Breast epithelium (tissue), 4 donors: ENCODE measurements at regions of chr10 and their contacts with region 1.

Region 1: DNA sequence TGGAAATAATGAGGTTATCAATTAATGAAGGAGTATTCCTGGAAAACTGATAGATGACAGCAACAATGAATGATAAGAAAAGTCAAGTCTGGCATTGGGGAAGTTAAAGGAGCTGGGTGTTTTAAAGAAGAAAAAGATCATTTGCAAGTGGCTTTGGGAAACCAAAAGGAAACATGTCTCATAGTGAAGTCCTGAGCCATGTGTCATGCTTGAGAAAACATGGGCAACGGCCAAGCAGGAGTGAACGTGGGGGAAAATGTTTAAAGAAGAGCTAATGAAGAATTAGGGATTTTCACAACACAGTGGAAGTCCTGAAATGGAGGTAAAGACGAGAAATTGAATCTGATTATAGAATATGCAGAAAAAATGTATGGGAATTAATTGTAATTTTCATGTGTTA is 1383.2 kb upstream of the CELF2 start:
- DNase-seq: no peak
- H3K4me3 ChIP-seq: no peak overlapping the region
- H3K27ac ChIP-seq: no peak overlapping the region
- H3K4me1 ChIP-seq: no peaks in the 10 kb centered on the region
- H3K27me3 ChIP-seq: no peaks in the 10 kb centered on the region
- CTCF ChIP-seq: no peak
- POLR2A ChIP-seq: no peak

Region 2: DNA sequence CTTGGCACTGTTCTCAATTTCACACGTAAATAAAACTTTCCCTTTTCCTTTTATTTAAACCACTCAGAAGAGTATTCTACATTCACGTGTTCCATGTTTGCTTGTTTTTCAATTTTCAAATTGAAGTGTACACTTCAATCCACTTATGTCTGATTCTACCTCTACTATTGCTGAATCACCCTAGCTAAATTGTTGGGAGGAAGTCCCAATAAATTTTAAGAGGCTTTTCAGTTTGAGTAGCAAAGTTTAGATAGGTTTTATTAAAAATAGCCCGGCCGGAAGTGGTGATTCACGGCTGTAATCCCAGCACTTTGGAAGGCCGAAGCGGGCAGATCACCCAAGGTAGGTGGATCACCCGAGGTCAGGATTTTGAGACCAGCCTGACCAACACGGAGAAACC is 31.5 kb before region 1 on chr10:
- intact Hi-C with region 1: loop called (anchors 2 kb)
- DNase-seq: no peak
- H3K4me3 ChIP-seq: no peak overlapping the region
- H3K27ac ChIP-seq: no peak overlapping the region
- H3K4me1 ChIP-seq: no peaks in the 10 kb centered on the region
- H3K27me3 ChIP-seq: no peaks in the 10 kb centered on the region
- CTCF ChIP-seq: no peak
- POLR2A ChIP-seq: no peak